CD4-positive, alpha-beta T cell (primary cell): ENCODE measurements at regions of chr19 and their contacts with region 1.

Region 1: GRCh38 chr19:35352448-35353304 is 5.0 kb downstream of the FFAR1 start:
- DNase-seq: peak; percentile 48 to 87 (median 57)
- ATAC-seq: peak; percentile 94
- H3K4me3 ChIP-seq: no peak overlapping the region
- H3K4me3 Mint-ChIP-seq: no peak overlapping the region
- H3K27ac ChIP-seq: no peak overlapping the region
- H3K27ac Mint-ChIP-seq: no peak overlapping the region
- H3K4me1 ChIP-seq: peaks cover 16% of the 10 kb centered on the region
- H3K4me1 Mint-ChIP-seq: peaks cover 11% of the 10 kb centered on the region
- H3K27me3 ChIP-seq: no peaks in the 10 kb centered on the region
- H3K27me3 Mint-ChIP-seq: peaks cover 5% of the 10 kb centered on the region
- CTCF ChIP-seq: peak; percentile 94

Region 2: GRCh38 chr19:35247526-35248306 is 105.0 kb before region 1 on chr19:
- CTCF ChIA-PET with region 1: no interaction called
- POLR2A ChIA-PET with region 1: no interaction called
- intact Hi-C with region 1: loop called in 1 of 2 experiments (anchors 2 kb)
- DNase-seq: peak in 12 of 14 experiments; percentile 51 to 81 (median 63)
- ATAC-seq: peak; percentile 50
- H3K4me3 ChIP-seq: peak overlapping the region; percentile 86
- H3K4me3 Mint-ChIP-seq: peak overlapping the region; percentile 92
- H3K27ac ChIP-seq: peak overlapping the region; percentile 59 to 73
- H3K27ac Mint-ChIP-seq: peak overlapping the region; percentile 85
- H3K4me1 ChIP-seq: peaks cover 31% of the 10 kb centered on the region
- H3K4me1 Mint-ChIP-seq: peaks cover 32% of the 10 kb centered on the region
- H3K27me3 ChIP-seq: peaks cover 0 to 6% of the 10 kb centered on the region in 2 experiments
- H3K27me3 Mint-ChIP-seq: peaks cover 39% of the 10 kb centered on the region
- CTCF ChIP-seq: peak; percentile 64

Region 3: DNA sequence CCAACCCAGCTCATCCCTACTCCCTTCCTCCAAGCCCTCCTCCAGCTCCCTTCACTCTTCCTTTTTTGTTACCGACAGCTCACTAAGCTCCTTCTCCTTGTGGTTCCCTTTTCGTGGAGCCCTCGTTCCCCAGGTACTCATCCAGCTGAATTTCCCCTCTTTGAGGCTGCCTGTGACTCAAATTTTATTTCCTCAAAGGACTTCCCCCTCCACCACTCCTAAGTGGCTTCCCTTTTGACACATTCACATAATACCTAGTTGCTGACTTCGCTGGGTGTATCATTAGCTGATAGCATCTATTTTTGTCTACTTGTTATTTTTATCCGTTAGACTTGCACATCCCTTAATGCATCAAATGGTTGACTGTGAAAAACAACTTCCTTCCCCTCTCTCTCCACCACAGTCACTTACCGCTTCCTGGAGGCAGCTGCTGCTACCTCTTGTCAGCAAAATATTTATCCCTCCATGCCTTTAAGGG is 109.8 kb after region 1 on chr19:
- CTCF ChIA-PET with region 1: interaction called, 27 read pairs
- POLR2A ChIA-PET with region 1: interaction called, 15 read pairs
- intact Hi-C with region 1: no loop called
- DNase-seq: peak in 13 of 14 experiments; percentile 17 to 94 (median 50)
- ATAC-seq: peak; percentile 91
- H3K4me3 ChIP-seq: no peak overlapping the region
- H3K4me3 Mint-ChIP-seq: peak overlapping the region; percentile 52
- H3K27ac ChIP-seq: peak overlapping the region; percentile 66 to 73
- H3K27ac Mint-ChIP-seq: peak overlapping the region; percentile 75
- H3K4me1 ChIP-seq: peaks cover 51% of the 10 kb centered on the region
- H3K4me1 Mint-ChIP-seq: peaks cover 33% of the 10 kb centered on the region
- H3K27me3 ChIP-seq: no peaks in the 10 kb centered on the region
- H3K27me3 Mint-ChIP-seq: no peaks in the 10 kb centered on the region
- CTCF ChIP-seq: no peak

Region 4: GRCh38 chr19:35468637-35469036 is 116.0 kb after region 1 on chr19:
- CTCF ChIA-PET with region 1: interaction called, 27 read pairs
- POLR2A ChIA-PET with region 1: interaction called, 13 read pairs
- intact Hi-C with region 1: loop called (anchors 1 kb)
- DNase-seq: peak; percentile 42 to 85 (median 58)
- ATAC-seq: peak; percentile 100
- H3K4me3 ChIP-seq: no peak overlapping the region
- H3K4me3 Mint-ChIP-seq: no peak overlapping the region
- H3K27ac ChIP-seq: no peak overlapping the region
- H3K27ac Mint-ChIP-seq: no peak overlapping the region
- H3K4me1 ChIP-seq: peaks cover 12% of the 10 kb centered on the region
- H3K4me1 Mint-ChIP-seq: peaks cover 1% of the 10 kb centered on the region
- H3K27me3 ChIP-seq: no peaks in the 10 kb centered on the region
- H3K27me3 Mint-ChIP-seq: no peaks in the 10 kb centered on the region
- CTCF ChIP-seq: peak; percentile 55

Region 5: DNA sequence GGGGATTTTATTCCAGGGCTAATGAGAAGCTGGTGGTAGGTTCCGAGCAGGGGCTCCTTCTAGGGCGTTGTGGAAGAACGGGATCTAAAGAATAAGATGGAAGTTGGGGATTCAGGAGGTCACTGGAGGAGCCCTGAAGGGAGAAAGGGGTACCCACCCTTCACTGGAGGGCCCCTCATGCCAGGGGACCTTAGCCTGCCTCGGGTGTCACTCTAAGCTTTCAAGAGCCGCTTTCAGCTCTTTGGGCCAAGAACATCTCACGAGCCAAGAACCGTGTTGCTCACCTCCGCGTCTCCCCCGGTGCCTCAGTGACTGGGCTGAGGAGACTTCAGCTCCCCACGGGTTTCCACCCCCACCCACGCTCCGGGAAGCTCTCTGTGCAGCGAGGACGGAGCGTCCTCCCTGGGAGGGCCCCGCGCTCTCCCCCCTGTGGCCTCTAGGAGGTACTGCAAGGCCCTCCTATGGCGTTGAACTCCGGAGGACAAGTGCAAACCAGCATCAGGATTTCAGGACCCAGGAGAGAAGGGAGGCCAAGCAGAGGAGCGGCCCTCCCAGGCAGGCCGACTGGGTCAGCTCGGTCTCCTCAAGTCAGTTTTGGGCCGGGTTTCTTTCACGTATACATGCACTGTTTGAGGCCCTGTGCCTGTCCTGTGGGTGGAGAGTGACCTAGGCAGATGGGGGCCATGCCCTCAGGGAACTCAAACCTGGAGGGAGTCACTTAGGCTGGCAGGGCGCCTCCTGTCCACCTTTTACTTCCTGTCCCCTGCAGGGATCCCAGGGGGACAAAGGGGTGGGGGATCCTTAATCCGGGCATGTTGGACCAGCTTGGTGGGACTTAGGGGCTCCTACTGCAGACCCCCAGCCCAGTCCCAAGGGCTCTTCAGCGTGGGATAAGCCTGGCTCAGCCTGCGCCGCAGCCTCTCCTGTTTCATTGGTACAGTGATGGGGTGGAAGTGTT is 142.7 kb after region 1 on chr19:
- CTCF ChIA-PET with region 1: interaction called, 11 read pairs
- POLR2A ChIA-PET with region 1: interaction called, 4 read pairs
- intact Hi-C with region 1: loop called (anchors 1 kb)
- DNase-seq: peak; percentile 46 to 82 (median 58)
- ATAC-seq: peak; percentile 100
- H3K4me3 ChIP-seq: no peak overlapping the region
- H3K4me3 Mint-ChIP-seq: no peak overlapping the region
- H3K27ac ChIP-seq: no peak overlapping the region
- H3K27ac Mint-ChIP-seq: no peak overlapping the region
- H3K4me1 ChIP-seq: peaks cover 10% of the 10 kb centered on the region
- H3K4me1 Mint-ChIP-seq: peaks cover 8% of the 10 kb centered on the region
- H3K27me3 ChIP-seq: peaks cover 0 to 2% of the 10 kb centered on the region in 2 experiments
- H3K27me3 Mint-ChIP-seq: peaks cover 15% of the 10 kb centered on the region
- CTCF ChIP-seq: peak; percentile 91

Region 6: DNA sequence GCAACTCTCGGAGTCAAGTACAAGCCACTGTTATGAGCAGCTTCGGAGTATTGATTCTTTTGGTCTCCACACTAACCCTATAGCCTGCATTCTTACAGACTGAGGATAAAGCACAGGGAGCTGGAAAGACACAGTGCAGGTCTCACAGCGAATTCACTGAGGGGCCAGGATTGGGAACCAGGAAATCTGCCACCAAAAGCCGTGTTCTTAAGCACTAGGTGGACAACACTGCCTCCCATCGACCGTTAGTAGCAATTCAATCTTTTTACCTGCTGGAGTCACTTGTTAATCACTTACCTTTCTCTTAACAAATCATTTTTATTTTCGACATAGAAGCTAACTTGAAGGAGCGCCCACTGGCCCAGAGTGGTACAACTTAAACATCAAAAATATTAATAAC is 239.6 kb after region 1 on chr19:
- CTCF ChIA-PET with region 1: no interaction called
- POLR2A ChIA-PET with region 1: no interaction called
- intact Hi-C with region 1: loop called in 1 of 2 experiments (anchors 5 kb)
- DNase-seq: peak in 4 of 14 experiments; percentile 38 to 71 (median 55)
- ATAC-seq: no peak
- H3K4me3 ChIP-seq: no peak overlapping the region
- H3K4me3 Mint-ChIP-seq: no peak overlapping the region
- H3K27ac ChIP-seq: no peak overlapping the region
- H3K27ac Mint-ChIP-seq: no peak overlapping the region
- H3K4me1 ChIP-seq: no peaks in the 10 kb centered on the region
- H3K4me1 Mint-ChIP-seq: no peaks in the 10 kb centered on the region
- H3K27me3 ChIP-seq: no peaks in the 10 kb centered on the region
- H3K27me3 Mint-ChIP-seq: peaks cover 17% of the 10 kb centered on the region
- CTCF ChIP-seq: peak; percentile 59

Region 7: DNA sequence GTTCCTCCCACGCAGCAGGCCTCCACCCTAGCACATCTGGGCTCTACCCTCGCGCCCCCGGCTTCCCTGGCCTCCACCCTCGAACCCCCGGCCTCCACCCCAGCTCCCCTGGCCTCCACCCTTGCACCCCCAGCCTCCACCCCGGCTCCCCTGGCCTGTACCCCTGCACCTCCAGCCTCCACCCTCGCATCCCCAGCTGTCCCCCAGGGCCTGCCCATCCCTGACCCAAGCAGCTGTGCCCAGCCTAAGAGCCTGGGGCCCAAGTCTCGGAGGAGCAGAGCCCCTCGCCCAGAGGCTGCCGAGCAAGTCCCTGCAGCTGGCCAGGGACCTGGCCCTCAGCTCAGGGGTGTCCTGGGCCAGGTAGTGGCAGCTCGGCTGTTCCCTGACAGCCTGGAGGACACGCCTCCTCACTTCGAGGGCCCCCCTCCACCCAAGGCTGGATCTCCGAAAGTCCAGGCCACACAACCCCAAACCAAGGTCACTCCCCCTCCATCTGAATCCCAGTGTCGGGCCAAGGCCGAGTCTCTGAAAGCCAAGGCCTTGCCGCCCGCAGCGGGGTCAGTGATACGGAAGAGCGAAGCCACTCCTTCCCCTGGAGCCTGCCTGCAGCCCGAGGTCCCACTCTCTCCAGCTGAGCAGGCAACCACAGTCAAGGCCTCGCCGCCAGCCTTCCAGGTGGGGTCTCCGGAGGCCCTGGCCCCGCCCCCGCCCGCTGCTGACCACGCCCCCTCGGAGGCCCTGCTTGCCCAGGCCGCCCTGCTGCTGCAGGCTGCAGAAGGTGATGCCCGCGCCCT is 414.8 kb after region 1 on chr19:
- CTCF ChIA-PET with region 1: no interaction called
- POLR2A ChIA-PET with region 1: no interaction called
- intact Hi-C with region 1: no loop called
- DNase-seq: no peak
- ATAC-seq: no peak
- H3K4me3 ChIP-seq: no peak overlapping the region
- H3K4me3 Mint-ChIP-seq: no peak overlapping the region
- H3K27ac ChIP-seq: no peak overlapping the region
- H3K27ac Mint-ChIP-seq: no peak overlapping the region
- H3K4me1 ChIP-seq: no peaks in the 10 kb centered on the region
- H3K4me1 Mint-ChIP-seq: no peaks in the 10 kb centered on the region
- H3K27me3 ChIP-seq: no peaks in the 10 kb centered on the region
- H3K27me3 Mint-ChIP-seq: no peaks in the 10 kb centered on the region
- CTCF ChIP-seq: no peak